ENCODE measurements at regions of chr1 and their contacts with region 1.

Region 1: GRCh38 chr1:151455231-151455630 is 4.1 kb downstream of the POGZ start:
- DNase-seq: no peak
- H3K4me3 ChIP-seq: no peak overlapping the region
- H3K27ac ChIP-seq: no peak overlapping the region
- H3K4me1 ChIP-seq: peaks cover 0 to 7% of the 10 kb centered on the region in 2 donors
- H3K27me3 ChIP-seq: no peaks in the 10 kb centered on the region
- CTCF ChIP-seq: no peak
- POLR2A ChIP-seq: no peak

Region 2: GRCh38 chr1:151425103-151425502 is 30.1 kb before region 1 on chr1:
- intact Hi-C with region 1: loop called (anchors 2 kb)
- DNase-seq: no peak
- H3K4me3 ChIP-seq: no peak overlapping the region
- H3K27ac ChIP-seq: no peak overlapping the region
- H3K4me1 ChIP-seq: no peaks in the 10 kb centered on the region
- H3K27me3 ChIP-seq: no peaks in the 10 kb centered on the region
- CTCF ChIP-seq: no peak
- POLR2A ChIP-seq: no peak

Region 3: GRCh38 chr1:151435160-151435559 is 20.1 kb before region 1 on chr1:
- intact Hi-C with region 1: no loop called
- DNase-seq: no peak
- H3K4me3 ChIP-seq: no peak overlapping the region
- H3K27ac ChIP-seq: no peak overlapping the region
- H3K4me1 ChIP-seq: no peaks in the 10 kb centered on the region
- H3K27me3 ChIP-seq: no peaks in the 10 kb centered on the region
- CTCF ChIP-seq: no peak
- POLR2A ChIP-seq: no peak

Region 4: DNA sequence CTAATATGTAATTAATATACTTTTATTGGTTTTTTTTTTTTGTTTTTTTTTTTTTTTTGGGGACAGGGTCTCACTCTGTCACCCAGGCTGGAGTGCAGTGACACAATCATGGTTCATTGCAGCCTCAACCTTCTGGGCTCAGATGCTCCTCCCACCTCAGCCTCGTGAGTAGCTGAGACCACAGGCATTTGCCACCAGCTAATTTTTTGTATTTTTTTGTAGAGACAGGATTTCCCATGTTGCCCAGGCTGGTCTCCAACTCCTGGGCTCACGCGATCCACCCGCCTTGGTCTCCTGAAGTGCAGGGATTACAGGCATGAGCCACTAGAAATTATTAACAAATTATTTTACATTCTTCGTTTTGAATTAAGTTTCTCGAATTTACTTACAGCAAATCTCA is 20.9 kb after region 1 on chr1:
- intact Hi-C with region 1: no loop called
- DNase-seq: no peak
- H3K4me3 ChIP-seq: no peak overlapping the region
- H3K27ac ChIP-seq: no peak overlapping the region
- H3K4me1 ChIP-seq: no peaks in the 10 kb centered on the region
- H3K27me3 ChIP-seq: no peaks in the 10 kb centered on the region
- CTCF ChIP-seq: no peak
- POLR2A ChIP-seq: no peak

Measured in breast epithelium (tissue), 4 donors.